Heart left ventricle (tissue), 16 donors: ENCODE measurements at regions of chr10 and their contacts with region 1.

Region 1: DNA sequence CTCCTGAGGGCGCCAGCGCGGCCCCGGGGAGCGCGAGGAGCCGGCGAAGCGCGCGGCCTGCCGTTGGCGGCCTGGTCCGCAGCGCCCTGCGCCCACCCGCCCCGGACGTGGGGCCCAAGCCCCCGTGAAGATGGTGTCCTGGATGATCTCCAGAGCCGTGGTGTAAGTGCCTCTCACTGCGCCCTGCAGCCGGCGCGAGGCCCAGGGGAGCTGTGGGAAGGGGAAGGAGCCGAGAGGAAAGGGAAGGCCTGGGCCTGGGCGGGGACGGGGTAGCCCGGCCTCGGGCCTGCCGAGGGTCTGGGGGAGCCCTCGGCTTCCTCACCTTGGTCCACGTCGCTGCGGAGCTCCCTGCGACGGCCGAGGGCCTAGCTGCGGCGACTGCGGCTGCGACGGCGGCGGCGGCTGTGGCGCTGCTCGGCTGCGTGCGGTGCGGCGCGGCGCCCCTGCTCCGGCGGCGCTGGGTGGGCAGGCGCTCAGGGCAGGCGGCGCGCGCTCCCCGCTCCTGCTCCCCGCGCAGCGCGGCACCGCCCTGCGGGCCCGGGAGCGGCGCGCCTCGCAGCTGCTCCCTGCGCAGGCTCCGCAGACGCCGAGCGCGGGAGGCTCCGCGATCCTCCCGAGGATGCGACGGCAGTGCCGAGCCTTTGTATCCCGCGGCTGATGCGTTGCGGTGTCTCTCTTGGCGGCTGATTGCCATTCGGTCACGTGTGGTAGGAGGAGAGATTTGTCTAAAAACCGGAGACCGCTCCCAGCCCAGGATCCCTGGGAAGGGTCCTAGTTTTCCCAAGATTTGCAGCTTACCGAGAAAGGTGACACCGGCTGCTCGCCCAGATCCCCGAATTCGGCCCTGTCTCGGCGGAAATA is 445 bp downstream of the REEP3 start:
- DNase-seq: peak; percentile 69 to 88 (median 76)
- ATAC-seq: peak; percentile 15 to 91 (median 82)
- H3K4me3 ChIP-seq: peak overlapping the region; percentile 63 to 91 (median 78)
- H3K27ac ChIP-seq: peak overlapping the region; percentile 97 to 99 (median 98)
- H3K4me1 ChIP-seq: peaks cover 4 to 64% (median 49%) of the 10 kb centered on the region in 12 donors
- H3K27me3 ChIP-seq: no peaks in the 10 kb centered on the region
- CTCF ChIP-seq: no peak
- POLR2A ChIP-seq: peak in 1 of 2 donors; percentile 35

Region 2: GRCh38 chr10:63573068-63573697 is 51.5 kb after region 1 on chr10:
- intact Hi-C with region 1: loop called in 2 of 10 experiments (anchors 5 to 10 kb)
- DNase-seq: no peak
- ATAC-seq: peak; percentile 20 to 67 (median 56)
- H3K4me3 ChIP-seq: peak overlapping the region in 1 of 12 donors; percentile 2
- H3K27ac ChIP-seq: peak overlapping the region; percentile 14 to 78 (median 56)
- H3K4me1 ChIP-seq: peaks cover 0 to 51% (median 41%) of the 10 kb centered on the region in 12 donors
- H3K27me3 ChIP-seq: no peaks in the 10 kb centered on the region
- CTCF ChIP-seq: no peak
- POLR2A ChIP-seq: no peak